ENCODE measurements at regions of chr19 and their contacts with region 1.

Region 1: DNA sequence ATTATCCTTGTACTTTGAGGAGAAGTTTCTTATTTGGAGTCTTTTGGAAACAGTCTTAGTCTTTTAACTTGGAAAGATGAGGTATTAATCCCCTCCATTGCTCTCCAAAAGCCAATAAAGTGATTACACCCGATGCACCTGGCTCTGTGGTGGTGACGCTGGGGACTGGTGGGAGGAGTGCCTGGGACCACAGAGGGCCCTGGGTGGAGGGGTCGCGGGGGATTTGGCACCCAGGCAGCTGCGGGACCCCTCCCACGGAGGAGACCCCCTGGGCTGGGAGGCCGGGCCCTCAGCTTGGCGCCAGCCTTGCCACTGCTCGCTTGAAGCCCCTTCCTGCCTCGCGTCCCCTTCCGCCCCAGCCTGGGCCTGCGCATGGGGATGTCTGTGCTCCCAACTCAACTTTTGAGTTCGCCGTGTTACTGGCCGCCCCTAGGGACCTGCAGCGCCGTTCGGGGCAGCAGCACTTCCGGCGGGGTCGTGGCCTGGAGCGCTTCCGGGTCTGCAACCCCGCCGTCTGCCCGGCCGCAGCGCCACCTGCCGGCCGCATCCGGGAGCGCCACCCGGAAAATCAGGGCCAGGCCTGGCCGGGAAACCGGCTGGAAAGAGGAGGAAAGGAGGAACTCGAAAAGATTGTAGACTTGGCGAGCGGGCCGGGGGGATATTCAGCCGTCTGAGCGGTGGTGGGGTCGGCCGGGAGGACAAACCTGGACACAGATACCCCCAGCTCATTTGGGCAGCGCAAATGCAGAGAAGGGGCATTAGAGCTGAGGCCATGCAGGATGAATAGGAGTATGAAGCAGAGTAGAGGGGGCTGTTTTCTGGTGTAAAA is 8.4 kb downstream of the PEAK3 start:
- DNase-seq: peak; percentile 82
- ATAC-seq: peak; percentile 12

Region 2: DNA sequence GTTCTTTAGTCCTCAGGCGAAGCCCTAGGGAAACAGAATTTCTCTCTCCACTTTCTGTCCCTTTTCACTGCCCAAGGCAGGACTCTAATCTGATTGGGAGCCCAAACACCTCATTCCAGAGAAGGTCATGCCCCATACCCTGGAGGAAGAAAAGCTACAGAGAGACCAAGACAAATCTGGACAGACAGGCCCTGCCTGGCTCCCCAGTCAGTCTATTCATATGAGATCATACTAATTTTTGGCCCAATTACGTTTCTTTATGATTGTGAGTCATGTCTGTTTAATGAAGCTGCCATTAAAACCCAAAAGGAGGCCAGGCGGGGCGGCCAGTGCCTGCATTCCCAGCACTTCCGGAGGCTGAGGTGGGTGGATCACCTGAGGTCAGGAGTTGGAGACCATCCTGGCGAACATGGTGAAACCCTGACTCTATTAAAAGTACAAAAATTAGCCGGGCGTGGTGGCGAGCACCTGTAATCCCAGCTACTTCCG is 118.9 kb before region 1 on chr19:
- intact Hi-C with region 1: loop called (anchors 5 kb)
- DNase-seq: no peak
- ATAC-seq: no peak

Region 3: DNA sequence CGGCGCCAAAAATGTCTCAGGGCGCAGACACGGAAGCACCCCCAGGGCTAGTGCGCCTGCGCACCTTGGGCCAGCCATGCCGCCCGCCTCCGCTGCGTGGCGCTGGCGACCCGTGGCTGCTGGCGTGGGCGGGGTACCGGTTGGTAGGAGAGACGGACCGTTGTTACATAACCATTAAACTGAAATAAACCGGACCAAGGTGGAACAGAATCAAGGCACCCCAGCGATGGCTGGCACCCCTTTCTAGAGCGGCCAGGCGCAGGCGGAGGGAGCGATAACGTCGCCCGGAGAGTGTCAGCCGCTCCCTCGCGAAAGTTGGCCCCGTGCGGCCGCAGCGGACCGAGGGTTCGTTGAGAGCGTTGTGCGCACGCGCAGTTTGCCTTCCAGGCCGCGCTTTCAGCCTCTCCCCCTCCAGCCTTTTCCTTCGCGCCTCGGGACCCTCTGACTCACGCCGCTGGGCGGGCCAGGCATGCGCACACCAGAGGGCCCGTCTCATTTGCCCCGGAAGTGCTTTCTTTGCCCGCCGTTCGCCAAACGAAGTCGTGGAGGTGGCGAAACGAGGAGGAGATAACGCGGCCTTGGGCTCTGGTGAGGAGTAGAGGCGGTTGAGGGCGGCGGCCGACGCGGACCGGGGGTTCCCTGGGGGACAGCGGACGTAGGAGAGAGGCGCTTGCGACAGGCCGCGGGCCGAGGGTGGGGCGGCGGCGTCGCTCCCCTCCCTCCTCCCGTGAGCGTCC is 37.1 kb before region 1 on chr19 and contains the starts of genes PLEKHJ1 and SF3A2:
- intact Hi-C with region 1: loop called (anchors 2 kb)
- DNase-seq: peak; percentile 98
- ATAC-seq: peak; percentile 97
- total RNA-seq, gene PLEKHJ1: 34.2 TPM
- total RNA-seq, gene SF3A2: 65.0 TPM

Region 4: DNA sequence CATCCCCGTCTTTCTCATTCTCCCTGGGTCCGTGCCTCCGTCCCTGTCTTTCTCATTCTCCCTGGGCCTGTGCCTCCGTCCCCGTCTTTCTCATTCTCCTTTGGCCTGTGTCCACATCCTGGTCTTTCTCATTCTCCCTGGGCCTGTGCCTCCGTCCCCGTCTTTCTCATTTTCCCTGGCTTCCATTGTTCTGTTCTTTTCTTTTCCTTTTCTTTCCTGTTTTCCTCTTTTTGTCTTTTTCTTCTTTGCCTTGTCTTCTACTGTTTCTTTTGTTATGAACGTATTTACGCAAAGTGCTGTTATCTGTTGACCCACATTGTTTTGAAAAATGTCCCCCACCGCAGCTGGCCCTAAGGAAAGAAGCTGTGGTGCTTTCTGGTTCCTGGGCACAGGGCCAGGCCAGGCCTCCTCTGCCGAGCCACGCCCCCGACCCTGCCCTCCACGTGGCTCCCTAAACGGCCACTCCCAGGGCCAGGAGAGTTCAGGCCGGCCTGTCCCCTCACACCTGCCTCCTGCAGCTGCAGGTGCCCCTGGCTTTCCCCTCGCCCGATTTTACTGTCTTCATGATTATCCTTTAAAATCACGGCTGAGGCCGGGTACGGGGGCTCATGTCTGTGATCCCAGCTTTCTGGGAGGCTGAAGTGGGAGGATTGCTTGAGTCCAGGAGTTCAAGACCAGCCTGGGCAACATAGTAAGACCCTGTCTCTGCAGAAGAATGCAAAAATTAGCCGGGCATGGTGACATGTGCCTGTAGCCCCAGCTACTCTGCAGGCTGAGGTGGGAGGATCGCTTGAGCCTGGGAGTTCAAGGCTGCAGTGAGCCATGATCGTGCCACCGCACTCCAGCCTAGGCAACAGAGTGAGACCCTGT is 72.5 kb after region 1 on chr19:
- intact Hi-C with region 1: no loop called
- DNase-seq: no peak
- ATAC-seq: peak; percentile 72

Region 5: GRCh38 chr19:2385053-2385721 is 111.6 kb after region 1 on chr19:
- intact Hi-C with region 1: loop called (anchors 10 kb)
- DNase-seq: no peak
- ATAC-seq: no peak

Region 6: DNA sequence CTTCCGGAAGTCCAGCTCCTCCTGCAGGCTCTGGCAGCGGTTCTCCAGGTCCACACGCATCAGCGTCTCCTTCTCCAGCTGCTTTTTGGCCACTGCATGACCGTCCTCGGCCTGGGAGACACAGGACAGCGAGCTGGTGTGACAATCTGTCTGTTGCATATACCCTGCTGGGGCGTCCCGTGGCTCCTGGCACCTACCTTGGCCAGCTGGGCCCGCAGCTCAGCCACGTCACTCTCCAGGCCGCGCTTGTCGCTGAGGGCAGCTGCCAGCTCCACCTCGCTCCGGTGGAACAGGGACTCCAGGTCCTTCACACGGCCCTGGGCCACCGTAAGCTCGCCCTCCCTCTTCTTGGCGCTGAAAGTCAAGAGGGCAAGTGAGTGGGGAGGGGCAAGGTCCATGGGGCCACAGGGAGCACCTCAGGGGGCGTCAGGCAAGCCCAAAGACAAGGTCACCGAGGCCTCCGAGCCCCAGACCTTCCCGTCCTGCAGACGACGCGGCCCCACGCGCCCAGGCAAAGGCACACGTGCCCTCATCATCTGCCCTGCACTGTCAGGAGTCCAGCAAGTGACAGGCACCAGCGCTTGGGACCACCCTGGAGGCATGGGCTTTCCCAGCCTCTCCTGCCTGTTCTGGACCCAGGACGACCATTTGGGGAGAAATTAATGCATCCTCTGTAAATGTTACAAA is 164.8 kb after region 1 on chr19:
- intact Hi-C with region 1: no loop called
- DNase-seq: no peak
- ATAC-seq: no peak

Measured in sciatic nerve (tissue), 2 donors.